ENCODE measurements at regions of chr16 and their contacts with region 1.

Region 1: DNA sequence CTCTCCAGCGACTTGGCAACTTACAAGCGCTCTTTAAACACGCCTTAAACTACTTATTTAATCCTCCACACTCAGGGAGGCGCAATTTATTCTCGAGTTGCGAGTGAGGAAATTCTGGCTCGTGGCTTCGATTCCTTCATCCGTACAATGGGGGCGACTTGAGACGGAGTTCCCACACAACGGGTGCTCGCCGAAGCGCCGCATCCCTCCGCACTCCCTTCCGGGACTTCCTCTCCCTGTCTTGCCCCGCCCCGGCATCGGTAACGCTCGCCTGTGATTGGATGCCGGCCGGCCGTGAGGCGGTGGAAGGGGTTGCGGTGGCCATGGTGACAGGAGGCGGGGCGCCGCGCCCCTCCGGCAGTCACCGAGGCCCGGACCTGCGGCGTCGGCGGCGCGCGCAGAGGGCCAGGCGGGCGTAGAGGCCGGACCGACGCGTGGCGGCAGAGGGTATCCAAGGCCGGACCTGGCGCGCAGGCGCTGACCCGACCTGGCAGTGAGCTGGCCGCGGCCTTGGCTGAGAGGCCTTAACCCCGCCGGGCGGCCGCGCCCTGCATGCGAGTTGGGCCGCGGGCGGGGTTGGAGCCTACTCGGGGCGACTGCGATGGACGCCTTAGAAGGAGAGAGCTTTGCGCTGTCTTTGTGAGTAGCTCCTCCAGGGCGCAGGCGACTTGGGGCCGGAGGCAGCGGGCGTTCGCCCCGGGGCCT is at the start of gene ARL2BP:
- DNase-seq: peak; percentile 98 to 99 (median 99)
- ATAC-seq: peak; percentile 98 to 99 (median 98)
- H3K4me3 ChIP-seq: peak within 1 kb of the TSS; percentile 36 to 94 (median 82)
- H3K27ac ChIP-seq: peak within 1 kb of the TSS; percentile 81 to 97 (median 94)
- H3K4me1 ChIP-seq: peaks cover 0 to 22% (median 14%) of the 10 kb centered on the region in 12 donors
- H3K27me3 ChIP-seq: no peaks in the 10 kb centered on the region
- CTCF ChIP-seq: peak in 6 of 12 donors; percentile 3 to 44 (median 10)
- POLR2A ChIP-seq: peak in 1 of 2 donors; percentile 86
- total RNA-seq, gene ARL2BP: 43.9 to 68.8 (median 52.1) TPM

Region 2: DNA sequence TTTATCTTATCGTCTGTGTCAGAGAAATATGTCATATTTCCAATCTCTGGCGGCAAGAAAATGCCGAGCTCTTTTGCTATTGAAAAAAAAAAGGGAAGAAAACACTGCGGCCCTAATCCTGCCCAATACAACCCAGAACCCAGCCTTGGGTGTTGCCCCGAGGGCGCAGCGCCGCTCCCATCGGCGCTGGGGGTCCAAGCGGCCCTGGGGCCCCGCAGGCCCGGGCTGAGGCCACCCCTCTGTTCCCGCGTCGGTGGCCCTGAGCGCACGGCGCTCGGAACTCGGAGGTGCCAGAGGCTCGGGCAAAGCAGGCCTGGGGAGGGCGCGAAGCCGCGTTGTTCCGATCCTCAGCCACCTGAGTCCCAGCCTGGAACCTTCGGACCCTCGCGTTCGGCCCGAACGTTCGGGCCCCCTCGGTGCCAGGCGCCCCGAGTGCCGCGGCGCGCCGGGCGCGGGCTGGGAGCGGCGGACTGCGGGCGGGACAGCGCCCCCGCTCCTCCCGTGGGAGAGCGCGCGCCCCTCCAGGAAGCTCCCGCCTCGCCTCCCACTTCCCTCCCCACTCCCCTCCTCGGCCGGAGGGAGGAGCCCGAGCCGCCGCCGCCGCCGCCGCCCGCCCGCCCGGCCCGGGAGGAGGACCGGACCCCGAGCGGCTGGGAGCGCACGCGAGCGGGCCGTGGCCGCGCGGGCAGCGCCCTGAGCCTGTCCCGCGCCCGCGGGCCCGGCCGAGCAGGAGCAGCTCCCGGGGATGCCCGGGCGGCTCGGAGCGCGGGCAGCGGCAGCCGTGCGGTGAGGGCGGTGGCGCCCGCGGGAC is 152.7 kb before region 1 on chr16 and contains the start of gene CPNE2:
- intact Hi-C with region 1: loop called in 1 of 10 experiments (anchors 10 kb)
- DNase-seq: peak; percentile 74 to 84 (median 83)
- ATAC-seq: peak; percentile 70 to 91 (median 84)
- H3K4me3 ChIP-seq: peak within 1 kb of the TSS; percentile 66 to 98 (median 88)
- H3K27ac ChIP-seq: peak within 1 kb of the TSS; percentile 82 to 94 (median 84)
- H3K4me1 ChIP-seq: peaks cover 2 to 40% (median 15%) of the 10 kb centered on the region in 12 donors
- H3K27me3 ChIP-seq: no peaks in the 10 kb centered on the region
- CTCF ChIP-seq: peak in 3 of 12 donors; percentile 11 to 36 (median 20)
- POLR2A ChIP-seq: peak in 1 of 2 donors; percentile 65
- total RNA-seq, gene CPNE2: 7.2 to 23.6 (median 11.9) TPM

Region 3: DNA sequence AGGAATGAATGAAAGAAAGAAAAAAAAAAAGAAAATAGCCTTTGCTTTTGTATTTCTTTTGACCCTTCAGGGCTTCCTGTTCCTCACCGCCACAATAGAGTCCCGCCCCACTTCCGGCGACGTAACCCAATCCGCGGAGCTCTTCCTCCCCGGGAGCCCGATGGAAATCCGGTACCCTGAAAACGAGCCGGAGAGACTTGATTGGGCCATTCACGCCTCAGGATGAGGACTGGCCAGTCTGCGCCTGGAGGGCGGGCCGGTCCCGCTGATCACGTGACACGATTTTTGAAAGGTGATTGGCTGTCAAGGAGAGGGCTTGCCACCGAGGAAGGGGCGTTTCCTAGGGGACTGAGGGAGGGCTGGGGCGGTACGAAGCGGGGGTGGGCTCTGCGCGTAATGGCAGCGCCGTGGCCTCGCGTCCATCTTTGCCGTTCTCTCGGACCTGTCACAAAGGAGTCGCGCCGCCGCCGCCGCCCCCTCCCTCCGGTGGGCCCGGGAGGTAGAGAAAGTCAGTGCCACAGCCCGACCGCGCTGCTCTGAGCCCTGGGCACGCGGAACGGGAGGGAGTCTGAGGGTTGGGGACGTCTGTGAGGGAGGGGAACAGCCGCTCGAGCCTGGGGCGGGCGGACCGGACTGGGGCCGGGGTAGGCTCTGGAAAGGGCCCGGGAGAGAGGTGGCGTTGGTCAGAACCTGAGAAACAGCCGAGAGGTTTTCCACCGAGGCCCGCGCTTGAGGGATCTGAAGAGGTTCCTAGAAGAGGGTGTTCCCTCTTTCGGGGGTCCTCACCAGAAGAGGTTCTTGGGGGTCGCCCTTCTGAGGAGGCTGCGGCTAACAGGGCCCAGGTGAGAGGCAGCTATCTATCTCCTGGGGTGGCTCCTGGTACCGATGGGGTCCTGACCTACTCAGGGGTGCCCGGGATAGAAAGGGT is 58.7 kb before region 1 on chr16 and contains the starts of genes PSME3IP1 and RSPRY1:
- intact Hi-C with region 1: loop called in 1 of 10 experiments (anchors 2 kb)
- DNase-seq: peak; percentile 97 to 99 (median 99)
- ATAC-seq: peak; percentile 97 to 99 (median 98)
- H3K4me3 ChIP-seq: peak within 1 kb of the TSS; percentile 80 to 99 (median 93)
- H3K27ac ChIP-seq: peak within 1 kb of the TSS; percentile 78 to 97 (median 94)
- H3K4me1 ChIP-seq: peaks cover 9 to 50% (median 27%) of the 10 kb centered on the region in 12 donors
- H3K27me3 ChIP-seq: no peaks in the 10 kb centered on the region
- CTCF ChIP-seq: no peak
- POLR2A ChIP-seq: peak in 1 of 2 donors; percentile 71
- total RNA-seq, gene PSME3IP1: 48.8 to 71.9 (median 65.8) TPM
- total RNA-seq, gene RSPRY1: 13.4 to 22.9 (median 17.1) TPM

Region 4: DNA sequence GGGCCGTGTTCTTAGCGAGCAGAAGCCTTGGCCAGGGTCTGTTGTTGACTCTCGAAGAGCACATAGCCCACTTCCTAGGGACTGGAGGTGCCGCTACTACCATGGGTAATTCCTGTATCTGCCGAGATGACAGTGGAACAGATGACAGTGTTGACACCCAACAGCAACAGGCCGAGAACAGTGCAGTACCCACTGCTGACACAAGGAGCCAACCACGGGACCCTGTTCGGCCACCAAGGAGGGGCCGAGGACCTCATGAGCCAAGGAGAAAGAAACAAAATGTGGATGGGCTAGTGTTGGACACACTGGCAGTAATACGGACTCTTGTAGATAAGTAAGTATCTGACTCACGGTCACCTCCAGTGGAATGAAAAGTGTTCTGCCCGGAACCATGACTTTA is 40.2 kb before region 1 on chr16:
- intact Hi-C with region 1: no loop called
- DNase-seq: no peak
- ATAC-seq: no peak
- H3K4me3 ChIP-seq: no peak overlapping the region
- H3K27ac ChIP-seq: no peak overlapping the region
- H3K4me1 ChIP-seq: no peaks in the 10 kb centered on the region
- H3K27me3 ChIP-seq: no peaks in the 10 kb centered on the region
- CTCF ChIP-seq: peak in 1 of 12 donors; percentile 20
- POLR2A ChIP-seq: no peak

Region 5: DNA sequence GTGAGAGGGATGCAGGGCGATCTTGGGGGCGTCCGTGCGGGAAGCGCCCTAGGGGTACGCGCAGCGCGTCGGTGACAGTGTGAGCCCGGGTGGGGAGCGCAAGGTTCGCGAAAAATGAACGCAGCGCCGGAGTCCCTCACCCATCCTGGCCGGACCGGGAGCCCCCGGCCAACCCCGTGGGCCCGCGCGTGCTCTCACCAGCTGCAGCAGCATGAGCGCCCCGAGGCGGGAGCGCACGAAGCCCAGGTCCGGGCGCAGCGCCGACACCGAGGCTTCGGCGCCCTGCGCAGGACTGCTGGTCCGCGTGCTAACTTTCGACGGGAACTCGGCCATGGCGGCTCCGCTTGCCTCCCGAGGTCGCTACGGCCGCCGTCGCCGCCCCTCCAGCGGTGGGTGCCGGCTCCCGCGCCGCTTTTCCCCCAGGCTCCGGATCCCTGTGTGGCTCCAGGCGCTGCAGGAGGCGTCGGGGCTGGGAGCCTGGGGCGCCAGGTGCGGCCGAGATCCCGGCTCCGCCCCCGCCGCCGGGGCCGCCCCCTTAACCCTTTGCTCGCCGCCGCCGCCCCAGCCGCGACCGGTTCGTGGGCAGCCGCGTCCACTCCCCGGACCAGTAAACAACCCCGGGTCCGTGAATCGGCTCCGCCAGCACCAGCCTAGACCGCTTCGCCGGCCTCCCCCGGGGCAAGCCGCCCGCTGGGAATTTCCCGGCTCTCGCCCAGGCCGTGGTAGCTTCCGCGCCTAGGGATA is 39.5 kb after region 1 on chr16 and contains the start of gene PLLP:
- intact Hi-C with region 1: loop called in 1 of 10 experiments (anchors 5 kb)
- DNase-seq: peak in 3 of 5 donors; percentile 34 to 70 (median 36)
- ATAC-seq: peak in 3 of 4 donors; percentile 43 to 74 (median 71)
- H3K4me3 ChIP-seq: peak within 1 kb of the TSS; percentile 27 to 71 (median 58)
- H3K27ac ChIP-seq: peak within 1 kb of the TSS in 4 of 12 donors; percentile 0 to 42 (median 34)
- H3K4me1 ChIP-seq: peaks cover 0 to 15% (median 10%) of the 10 kb centered on the region in 12 donors
- H3K27me3 ChIP-seq: peaks cover 0 to 35% (median 7%) of the 10 kb centered on the region in 9 donors
- CTCF ChIP-seq: no peak
- POLR2A ChIP-seq: no peak
- total RNA-seq, gene PLLP: 2.0 to 14.8 (median 2.4) TPM

Region 6: GRCh38 chr16:57413301-57413730 is 168.4 kb after region 1 on chr16:
- intact Hi-C with region 1: loop called in 2 of 10 experiments (anchors 5 kb)
- DNase-seq: no peak
- ATAC-seq: no peak
- H3K4me3 ChIP-seq: no peak overlapping the region
- H3K27ac ChIP-seq: no peak overlapping the region
- H3K4me1 ChIP-seq: peaks cover 3 to 43% (median 29%) of the 10 kb centered on the region in 12 donors
- H3K27me3 ChIP-seq: no peaks in the 10 kb centered on the region
- CTCF ChIP-seq: no peak
- POLR2A ChIP-seq: no peak

Measured in heart left ventricle (tissue), 16 donors.